Activated CD4-positive, alpha-beta memory T cell treated with anti-CD3 and anti-CD28 coated beads for 36 hours (primary cell): ENCODE measurements at regions of chr13 and their contacts with region 1.

Region 1: GRCh38 chr13:46341112-46341711 is 45.8 kb downstream of the RUBCNL start:
- DNase-seq: peak; percentile 68
- H3K4me3 Mint-ChIP-seq: peak overlapping the region; percentile 54
- H3K27ac Mint-ChIP-seq: peak overlapping the region; percentile 82
- H3K4me1 Mint-ChIP-seq: peaks cover 38% of the 10 kb centered on the region
- H3K27me3 Mint-ChIP-seq: peaks cover 5% of the 10 kb centered on the region

Region 2: DNA sequence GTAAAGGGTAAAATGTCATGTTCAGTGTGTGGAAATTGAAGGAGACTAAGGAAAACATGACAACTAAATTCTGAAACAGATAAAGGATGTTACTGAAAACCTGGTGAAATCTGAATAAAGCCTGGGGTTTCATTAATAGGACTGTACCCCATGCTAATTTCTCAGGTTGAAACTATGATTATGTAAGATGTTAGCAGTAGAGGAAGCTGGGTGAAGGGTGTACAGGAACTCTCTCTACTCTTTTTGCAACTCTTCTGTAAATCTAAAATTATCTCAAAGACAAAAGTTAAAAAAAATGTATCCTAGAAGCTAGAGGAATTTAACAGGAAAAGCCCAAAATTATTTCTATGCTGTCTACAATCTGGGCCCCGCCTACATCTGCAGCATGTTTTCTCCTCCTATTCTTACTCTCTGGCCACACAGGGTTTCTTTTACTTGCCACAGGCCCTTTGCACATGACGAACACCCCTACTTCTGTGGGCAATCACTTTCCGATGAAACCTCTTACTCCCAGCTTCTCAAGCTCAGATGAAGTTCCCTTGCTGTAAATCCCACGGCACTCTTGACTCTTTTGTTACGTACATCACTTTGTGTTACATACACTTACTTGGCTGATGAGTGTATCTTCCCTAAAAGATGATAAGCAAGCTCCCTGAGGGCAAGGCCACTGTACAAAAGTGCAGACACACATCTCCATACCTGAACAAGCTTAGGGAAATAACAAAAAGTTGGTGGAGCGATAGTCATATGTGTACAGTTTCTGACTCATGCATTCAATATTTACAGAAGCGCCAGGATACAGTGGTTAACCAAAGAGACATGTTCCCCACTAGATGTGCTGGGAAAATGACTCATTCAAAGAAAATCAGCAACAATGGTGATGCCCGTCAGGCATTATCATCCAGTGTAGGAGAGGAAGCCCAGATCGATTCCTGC is 13.2 kb after region 1 on chr13:
- CTCF ChIA-PET with region 1: interaction called, 3 read pairs
- POLR2A ChIA-PET with region 1: interaction called, 13 read pairs
- intact Hi-C with region 1: loop called (anchors 1 kb)
- DNase-seq: peak; percentile 46
- H3K4me3 Mint-ChIP-seq: peak overlapping the region; percentile 31
- H3K27ac Mint-ChIP-seq: peak overlapping the region; percentile 82
- H3K4me1 Mint-ChIP-seq: peaks cover 11% of the 10 kb centered on the region
- H3K27me3 Mint-ChIP-seq: peaks cover 3% of the 10 kb centered on the region

Region 3: DNA sequence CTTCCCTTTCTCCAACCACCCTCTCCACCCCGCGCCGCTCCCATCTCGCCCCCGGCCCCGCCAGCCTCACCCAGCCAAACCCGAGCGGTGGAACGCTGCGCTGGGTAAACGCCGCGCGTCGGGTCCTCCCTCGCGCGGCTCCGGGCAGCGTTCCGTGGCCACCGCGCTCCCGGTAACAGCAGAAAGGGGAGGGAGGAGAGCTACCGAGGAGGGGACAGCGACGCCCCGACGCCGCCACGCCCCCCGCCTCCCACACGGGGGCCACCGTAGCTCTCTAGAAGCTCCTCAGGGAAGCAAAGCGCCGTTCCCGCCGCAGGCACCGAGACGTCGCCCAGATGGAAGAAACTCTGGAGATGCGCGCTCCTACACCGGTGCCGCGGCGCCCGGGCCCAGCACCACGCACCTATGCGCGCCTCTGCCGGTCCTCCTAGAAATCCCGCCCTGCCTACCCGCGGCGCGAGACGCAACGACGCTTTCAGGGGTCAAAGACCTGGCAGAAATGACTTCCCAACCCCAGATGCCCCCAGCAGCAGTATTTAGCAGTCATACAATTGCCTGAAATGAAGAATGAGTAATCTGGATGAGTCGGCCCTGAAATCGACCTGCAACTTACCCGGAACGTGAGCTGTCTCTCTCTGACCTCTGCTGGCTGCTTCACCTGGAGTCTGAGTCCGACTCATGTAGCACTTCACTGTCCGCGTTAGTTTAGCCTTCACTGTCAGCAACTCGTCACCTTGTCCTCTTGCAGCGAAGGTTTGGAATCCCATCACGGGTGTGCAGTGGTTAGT is 46.0 kb after region 1 on chr13 and contains the start of gene RUBCNL:
- CTCF ChIA-PET with region 1: interaction called, 3 read pairs
- POLR2A ChIA-PET with region 1: no interaction called
- intact Hi-C with region 1: loop called (anchors 1 kb)
- DNase-seq: peak; percentile 65
- H3K4me3 Mint-ChIP-seq: peak within 1 kb of the TSS; percentile 76
- H3K27ac Mint-ChIP-seq: no peak within 1 kb of the TSS
- H3K4me1 Mint-ChIP-seq: peaks cover 25% of the 10 kb centered on the region
- H3K27me3 Mint-ChIP-seq: peaks cover 37% of the 10 kb centered on the region
- total RNA-seq, gene RUBCNL: 0.73 to 0.74 TPM

Region 4: DNA sequence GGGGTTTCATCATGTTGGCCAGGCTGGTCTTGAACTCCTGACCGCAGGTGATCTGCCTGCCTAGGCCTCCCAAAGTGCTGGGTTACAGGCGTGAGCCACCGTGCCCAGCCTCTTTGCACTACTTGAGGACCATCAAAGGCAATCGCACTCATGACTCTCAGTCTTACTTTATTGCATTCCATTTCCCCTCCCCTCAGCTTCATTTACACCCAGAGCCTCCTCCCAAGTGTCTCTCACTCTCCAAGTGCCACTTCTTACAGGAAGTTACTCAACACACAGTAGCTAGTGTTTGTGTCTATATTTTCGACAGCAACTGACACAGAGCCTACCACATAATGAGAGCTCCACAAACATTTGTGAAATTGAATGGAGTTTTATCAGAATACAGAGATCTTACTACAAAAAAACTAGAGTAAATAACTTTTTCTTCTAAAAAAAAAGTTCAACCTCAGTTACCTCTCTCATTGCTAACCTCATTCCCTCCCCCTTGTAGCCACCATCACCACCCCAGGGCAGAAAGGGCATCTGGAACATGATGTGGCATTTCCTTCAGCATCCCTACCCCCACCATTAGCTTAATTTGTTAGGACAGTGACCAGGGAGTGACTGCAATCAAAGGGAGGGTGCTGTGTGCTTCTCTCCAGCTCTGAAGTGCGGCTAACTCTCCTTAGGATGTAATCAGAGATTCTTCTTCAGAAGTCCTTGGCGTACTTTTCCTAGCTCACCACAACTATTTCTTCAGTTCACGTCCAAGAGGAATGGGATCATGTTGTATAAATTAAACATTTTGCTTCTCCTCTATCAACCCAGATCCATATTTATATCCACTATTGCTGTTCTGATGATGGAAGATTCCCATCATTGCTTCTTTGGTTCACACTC is 62.9 kb after region 1 on chr13:
- CTCF ChIA-PET with region 1: no interaction called
- POLR2A ChIA-PET with region 1: no interaction called
- intact Hi-C with region 1: no loop called
- DNase-seq: no peak
- H3K4me3 Mint-ChIP-seq: no peak overlapping the region
- H3K27ac Mint-ChIP-seq: no peak overlapping the region
- H3K4me1 Mint-ChIP-seq: no peaks in the 10 kb centered on the region
- H3K27me3 Mint-ChIP-seq: no peaks in the 10 kb centered on the region